Activated naive CD4-positive, alpha-beta T cell treated with anti-CD3 and anti-CD28 coated beads for 36 hours (primary cell): ENCODE measurements at regions of chr5 and their contacts with region 1.

Region 1: GRCh38 chr5:135426102-135427082 is 20.8 kb downstream of the DCANP1 start:
- DNase-seq: peak; percentile 42
- H3K4me3 Mint-ChIP-seq: no peak overlapping the region
- H3K27ac Mint-ChIP-seq: no peak overlapping the region
- H3K4me1 Mint-ChIP-seq: peaks cover 3% of the 10 kb centered on the region
- H3K27me3 Mint-ChIP-seq: no peaks in the 10 kb centered on the region

Region 2: GRCh38 chr5:135323701-135324132 is 102.7 kb before region 1 on chr5:
- CTCF ChIA-PET with region 1: interaction called, 10 read pairs
- intact Hi-C with region 1: no loop called
- DNase-seq: no peak
- H3K4me3 Mint-ChIP-seq: no peak overlapping the region
- H3K27ac Mint-ChIP-seq: no peak overlapping the region
- H3K4me1 Mint-ChIP-seq: peaks cover 20% of the 10 kb centered on the region
- H3K27me3 Mint-ChIP-seq: no peaks in the 10 kb centered on the region

Region 3: GRCh38 chr5:135376961-135377624 is 49.3 kb before region 1 on chr5:
- CTCF ChIA-PET with region 1: interaction called, 3 read pairs
- intact Hi-C with region 1: loop called (anchors 1 kb)
- DNase-seq: peak; percentile 48
- H3K4me3 Mint-ChIP-seq: no peak overlapping the region
- H3K27ac Mint-ChIP-seq: peak overlapping the region; percentile 8
- H3K4me1 Mint-ChIP-seq: peaks cover 66% of the 10 kb centered on the region
- H3K27me3 Mint-ChIP-seq: no peaks in the 10 kb centered on the region

Region 4: GRCh38 chr5:135398853-135399523 is 27.4 kb before region 1 on chr5 and contains the start of gene MACROH2A1:
- CTCF ChIA-PET with region 1: interaction called, 5 read pairs
- intact Hi-C with region 1: loop called (anchors 1 kb)
- DNase-seq: peak; percentile 87
- H3K4me3 Mint-ChIP-seq: peak within 1 kb of the TSS; percentile 85
- H3K27ac Mint-ChIP-seq: peak within 1 kb of the TSS; percentile 81
- H3K4me1 Mint-ChIP-seq: peaks cover 45% of the 10 kb centered on the region
- H3K27me3 Mint-ChIP-seq: no peaks in the 10 kb centered on the region
- total RNA-seq, gene MACROH2A1: 153 TPM

Region 5: DNA sequence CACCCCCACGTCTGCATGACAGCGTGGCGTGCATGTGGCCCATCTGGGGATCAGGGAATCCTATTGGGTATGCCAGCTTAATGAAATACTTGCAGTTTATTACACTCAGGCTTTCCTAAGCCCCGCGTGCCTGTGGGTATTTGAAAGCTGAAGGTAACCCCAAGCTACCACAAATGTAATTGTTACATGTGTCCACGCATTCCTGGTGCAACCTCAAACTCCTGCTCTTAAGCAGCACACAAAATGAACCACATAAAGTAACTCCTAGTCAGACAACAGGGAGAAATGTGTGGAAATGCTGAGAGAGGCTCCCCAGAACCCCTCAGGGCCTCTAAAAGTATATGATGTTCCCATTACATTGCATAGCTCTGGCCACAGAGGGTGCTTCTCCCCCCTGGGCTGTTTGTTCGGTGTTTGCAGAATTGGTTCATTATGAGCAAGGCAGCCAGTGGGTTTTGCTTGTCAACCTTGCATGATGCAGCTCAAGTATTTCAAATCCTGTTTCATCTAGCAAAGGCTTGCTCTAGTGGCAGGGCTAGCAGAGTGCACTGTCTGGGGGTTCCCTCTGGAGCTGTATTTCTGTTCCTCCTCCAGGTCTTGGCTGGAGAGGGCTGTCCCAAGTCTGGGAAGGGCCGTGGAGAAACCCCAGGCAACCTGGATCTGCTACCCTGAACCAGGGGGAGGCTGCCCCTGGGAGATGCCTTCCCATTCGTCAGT is 22.6 kb after region 1 on chr5:
- CTCF ChIA-PET with region 1: no interaction called
- intact Hi-C with region 1: no loop called
- DNase-seq: no peak
- H3K4me3 Mint-ChIP-seq: no peak overlapping the region
- H3K27ac Mint-ChIP-seq: no peak overlapping the region
- H3K4me1 Mint-ChIP-seq: no peaks in the 10 kb centered on the region
- H3K27me3 Mint-ChIP-seq: no peaks in the 10 kb centered on the region

Region 6: GRCh38 chr5:135535820-135536801 is 109.7 kb after region 1 on chr5 and contains the start of gene NEUROG1:
- CTCF ChIA-PET with region 1: no interaction called
- intact Hi-C with region 1: no loop called
- DNase-seq: no peak
- H3K4me3 Mint-ChIP-seq: no peak within 1 kb of the TSS
- H3K27ac Mint-ChIP-seq: no peak within 1 kb of the TSS
- H3K4me1 Mint-ChIP-seq: peaks cover 12% of the 10 kb centered on the region
- H3K27me3 Mint-ChIP-seq: peaks cover 75% of the 10 kb centered on the region
- total RNA-seq, gene NEUROG1: not detected